A673 (cell line): ENCODE measurements at regions of chr19 and their contacts with region 1.

Region 1: DNA sequence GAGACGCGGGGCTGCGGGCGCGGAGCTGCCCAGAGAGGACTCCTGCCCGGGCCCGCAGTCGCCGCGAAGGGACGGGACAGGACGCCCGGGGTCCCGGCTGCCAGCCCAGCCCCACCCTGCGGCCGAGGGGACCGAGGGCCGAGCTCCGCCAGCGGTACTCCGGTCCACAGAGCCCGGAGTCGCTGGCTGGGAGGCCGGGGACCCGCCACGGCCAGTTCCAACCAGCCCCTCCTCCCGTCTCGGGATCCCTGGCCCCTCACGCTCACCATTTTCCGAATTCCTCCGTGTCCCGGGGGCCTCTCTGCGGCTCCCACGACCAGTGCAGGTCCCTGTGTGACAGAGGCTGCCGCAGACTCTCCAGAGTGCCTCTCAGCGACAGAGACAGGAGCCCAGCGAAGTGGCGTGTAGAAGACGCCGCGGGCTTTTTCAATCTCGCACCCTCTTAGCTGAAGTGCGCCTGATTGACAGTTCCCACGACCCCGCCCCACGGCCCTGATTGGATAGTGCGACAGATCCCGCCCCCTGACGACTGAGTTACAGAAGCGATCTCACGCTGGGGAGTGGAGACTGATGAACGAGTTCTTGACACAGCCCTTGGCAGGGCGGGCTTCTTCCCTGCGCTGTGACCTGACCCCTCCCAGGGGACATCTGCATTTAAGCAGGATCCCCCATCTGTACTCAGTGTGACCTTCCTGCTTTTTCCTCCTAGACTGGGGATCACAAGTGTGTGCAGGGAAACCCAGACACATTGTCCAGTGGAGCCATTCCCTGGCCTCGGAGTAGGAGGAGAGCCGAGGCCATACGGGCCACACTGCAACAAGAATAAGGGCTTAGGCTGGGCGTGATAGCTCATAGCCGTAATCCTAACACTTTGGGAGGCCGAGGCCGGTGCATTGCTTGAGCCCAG is 44.0 kb downstream of the ZNF823 start:
- DNase-seq: peak; percentile 98
- H3K4me3 ChIP-seq: peak overlapping the region; percentile 73
- H3K27ac ChIP-seq: peak overlapping the region; percentile 83
- H3K4me1 ChIP-seq: no peaks in the 10 kb centered on the region
- H3K27me3 ChIP-seq: no peaks in the 10 kb centered on the region
- CTCF ChIP-seq: no peak

Region 2: DNA sequence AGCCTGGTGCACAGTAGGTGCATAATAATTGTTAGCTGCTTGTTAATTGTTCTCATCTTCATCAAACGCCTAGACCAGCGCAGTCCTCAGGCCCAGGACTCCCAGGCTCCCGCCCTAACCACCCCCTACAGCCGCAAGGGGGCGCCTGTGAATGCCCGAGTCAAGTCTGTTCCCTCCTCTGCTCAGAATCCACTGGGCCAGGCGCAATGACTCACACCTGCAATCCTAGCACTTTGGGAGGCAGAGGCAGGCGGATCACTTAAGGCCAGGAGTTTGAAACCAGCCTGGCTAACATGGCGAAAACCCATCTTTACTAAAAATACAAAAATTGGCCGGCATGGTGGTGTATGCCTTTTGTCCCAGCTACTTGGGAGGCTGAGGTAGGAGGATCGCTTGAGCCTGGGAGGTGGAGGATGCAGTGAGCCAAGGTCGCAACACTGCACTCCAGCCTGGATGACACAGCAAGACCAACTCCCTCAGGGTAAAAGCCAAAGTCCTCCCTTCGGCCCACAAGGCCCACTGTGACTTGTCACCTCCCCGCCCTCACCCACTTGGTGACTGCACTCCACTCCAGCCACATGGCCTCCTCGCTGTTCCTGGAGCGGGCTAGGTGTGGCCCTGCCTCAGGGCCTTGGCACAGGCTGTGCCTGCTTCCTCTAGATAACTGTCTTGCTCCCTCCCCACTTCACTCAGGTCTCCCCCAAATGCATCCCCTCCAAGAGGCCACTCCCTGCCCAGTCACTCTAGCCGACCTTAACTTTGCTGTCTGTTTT is 198.2 kb before region 1 on chr19:
- CTCF ChIA-PET with region 1: no interaction called
- POLR2A ChIA-PET with region 1: no interaction called
- intact Hi-C with region 1: no loop called
- DNase-seq: peak; percentile 84
- H3K4me3 ChIP-seq: no peak overlapping the region
- H3K27ac ChIP-seq: no peak overlapping the region
- H3K4me1 ChIP-seq: no peaks in the 10 kb centered on the region
- H3K27me3 ChIP-seq: no peaks in the 10 kb centered on the region
- CTCF ChIP-seq: peak; percentile 87

Region 3: DNA sequence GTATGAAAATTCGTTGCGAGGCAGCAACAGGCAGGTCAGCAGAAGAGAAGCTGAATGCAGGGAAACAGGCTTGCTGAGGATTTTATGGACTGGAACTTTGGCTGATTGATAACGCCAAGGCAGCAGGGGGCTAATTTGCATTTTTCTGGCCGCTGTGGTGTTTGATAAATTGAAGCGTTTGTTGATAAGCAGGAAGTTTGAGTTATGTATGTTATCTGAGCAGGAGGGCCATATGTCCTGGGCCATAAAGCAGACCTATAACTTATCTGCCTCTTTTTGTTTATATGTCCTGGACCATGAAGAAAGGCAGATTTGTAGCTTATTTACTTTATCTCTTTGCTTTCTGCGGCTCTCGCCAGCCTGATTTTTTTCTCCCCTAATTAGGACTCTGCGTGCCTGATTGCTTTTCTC is 31.6 kb before region 1 on chr19:
- CTCF ChIA-PET with region 1: no interaction called
- POLR2A ChIA-PET with region 1: no interaction called
- intact Hi-C with region 1: no loop called
- DNase-seq: no peak
- H3K4me3 ChIP-seq: no peak overlapping the region
- H3K27ac ChIP-seq: no peak overlapping the region
- H3K4me1 ChIP-seq: no peaks in the 10 kb centered on the region
- H3K27me3 ChIP-seq: no peaks in the 10 kb centered on the region
- CTCF ChIP-seq: no peak

Region 4: DNA sequence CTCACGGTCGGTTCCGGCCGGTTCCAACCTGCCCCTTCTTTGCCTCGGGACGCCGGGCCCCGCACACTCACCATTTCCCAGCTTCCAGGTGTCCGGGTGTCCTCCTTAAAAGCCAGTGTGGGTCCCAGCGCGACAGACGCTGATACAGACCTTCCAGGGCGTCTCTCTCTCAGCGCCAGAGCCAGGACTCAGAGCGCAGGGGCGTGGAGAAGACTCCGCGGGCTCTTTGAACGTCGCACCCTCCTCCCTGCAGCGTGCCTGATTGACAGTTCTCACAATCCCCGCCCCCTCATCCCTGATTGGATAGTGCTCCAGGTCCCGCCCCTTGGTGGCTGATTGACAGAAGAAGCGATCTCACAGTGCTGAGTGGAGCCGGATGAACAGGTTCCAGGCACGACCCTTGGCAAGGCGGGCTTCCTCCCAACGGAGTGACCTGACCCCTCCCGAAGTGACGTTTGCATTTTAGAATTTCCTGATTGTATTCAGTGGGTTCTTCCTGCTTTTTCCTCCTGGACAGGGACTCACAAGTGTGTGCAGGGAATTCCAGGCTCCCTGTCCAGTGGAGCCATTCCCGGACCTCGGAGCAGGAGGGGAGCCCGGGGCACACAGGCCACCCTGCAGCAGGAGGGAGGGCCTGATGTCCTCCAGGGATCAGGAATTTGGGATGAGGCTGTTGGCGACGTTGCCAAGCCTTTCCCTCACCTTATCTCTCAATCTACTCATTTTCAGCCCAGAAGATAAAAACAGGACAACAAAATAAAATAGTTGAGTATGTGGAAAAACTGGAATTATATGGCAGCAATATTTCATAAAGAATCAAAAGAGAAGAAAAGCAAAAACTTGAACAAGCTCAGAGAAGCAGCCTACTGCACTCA is 44.2 kb after region 1 on chr19 and contains the start of gene ZNF823:
- CTCF ChIA-PET with region 1: interaction called, 9 read pairs
- POLR2A ChIA-PET with region 1: no interaction called
- intact Hi-C with region 1: loop called (anchors 5 kb)
- DNase-seq: peak; percentile 99
- H3K4me3 ChIP-seq: peak within 1 kb of the TSS; percentile 81
- H3K27ac ChIP-seq: peak within 1 kb of the TSS; percentile 82
- H3K4me1 ChIP-seq: peaks cover 18% of the 10 kb centered on the region
- H3K27me3 ChIP-seq: no peaks in the 10 kb centered on the region
- CTCF ChIP-seq: no peak
- total RNA-seq, gene ZNF823: 7.1 and 8.4 TPM in 2 replicates

Region 5: GRCh38 chr19:11766597-11767591 is 72.1 kb after region 1 on chr19 and contains the start of gene ZNF441:
- CTCF ChIA-PET with region 1: no interaction called
- POLR2A ChIA-PET with region 1: interaction called, 17 read pairs
- intact Hi-C with region 1: loop called (anchors 2 kb)
- DNase-seq: peak; percentile 94
- H3K4me3 ChIP-seq: peak within 1 kb of the TSS; percentile 68
- H3K27ac ChIP-seq: peak within 1 kb of the TSS; percentile 47
- H3K4me1 ChIP-seq: no peaks in the 10 kb centered on the region
- H3K27me3 ChIP-seq: no peaks in the 10 kb centered on the region
- CTCF ChIP-seq: no peak
- total RNA-seq, gene ZNF441: 3.7 TPM in 2 replicates